A673 (cell line): ENCODE measurements at regions of chr7 and their contacts with region 1.

Region 1: DNA sequence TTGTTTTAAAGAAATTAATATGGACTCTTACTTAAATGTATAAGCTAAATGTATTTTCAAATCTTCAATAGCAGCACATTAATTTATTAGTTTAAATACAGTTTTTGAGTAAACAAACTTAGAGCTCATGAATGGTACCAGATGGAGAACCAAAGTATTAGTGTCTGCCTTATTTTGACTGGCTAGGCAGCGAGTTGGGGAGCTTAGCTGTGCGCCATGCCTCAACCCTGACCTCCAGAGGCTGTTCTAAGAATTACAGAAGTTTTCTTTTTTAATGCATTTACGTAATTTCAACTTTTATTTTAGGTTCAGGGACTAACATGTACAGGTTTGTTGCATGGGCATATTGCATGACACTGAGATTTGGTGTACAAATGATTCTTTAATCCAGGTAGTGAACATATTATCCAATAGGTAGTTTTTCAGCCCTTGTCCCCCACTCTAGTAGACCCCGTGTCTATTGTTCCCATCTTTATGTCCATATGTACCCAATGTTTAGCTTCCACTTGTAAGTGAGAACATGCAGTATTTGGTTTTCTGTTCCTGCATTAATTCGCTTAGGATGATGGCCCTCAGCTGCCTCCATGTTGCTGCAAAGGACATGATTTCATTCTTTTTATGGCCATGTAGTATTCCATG is 166.8 kb downstream of the IQUB start:
- DNase-seq: peak; percentile 76
- H3K4me3 ChIP-seq: no peak overlapping the region
- H3K27ac ChIP-seq: no peak overlapping the region
- H3K4me1 ChIP-seq: peaks cover 8% of the 10 kb centered on the region
- H3K27me3 ChIP-seq: no peaks in the 10 kb centered on the region
- CTCF ChIP-seq: peak; percentile 88

Region 2: DNA sequence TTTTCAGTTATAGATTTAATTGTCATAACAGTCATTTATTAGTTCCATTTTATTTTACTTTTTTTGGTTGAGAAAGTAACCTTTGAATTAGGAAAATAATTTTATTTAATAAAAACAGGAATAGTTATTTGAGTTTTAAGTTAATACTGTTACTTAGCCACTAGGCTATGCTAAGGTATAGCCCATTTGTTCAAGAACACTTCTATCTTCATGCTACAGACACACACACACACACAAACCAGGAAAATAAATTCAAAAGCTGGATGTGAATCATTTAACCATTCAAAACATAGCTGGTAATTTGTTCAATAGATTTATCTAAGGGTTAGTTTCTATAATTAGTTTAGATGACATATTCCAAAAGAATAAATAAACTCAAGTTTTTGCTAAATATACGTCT is 817.1 kb before region 1 on chr7:
- CTCF ChIA-PET with region 1: no interaction called
- POLR2A ChIA-PET with region 1: no interaction called
- intact Hi-C with region 1: loop called (anchors 10 kb)
- DNase-seq: no peak
- H3K4me3 ChIP-seq: no peak overlapping the region
- H3K27ac ChIP-seq: no peak overlapping the region
- H3K4me1 ChIP-seq: no peaks in the 10 kb centered on the region
- H3K27me3 ChIP-seq: no peaks in the 10 kb centered on the region
- CTCF ChIP-seq: peak; percentile 37; the same call in 1 of the 2 replicates

Region 3: DNA sequence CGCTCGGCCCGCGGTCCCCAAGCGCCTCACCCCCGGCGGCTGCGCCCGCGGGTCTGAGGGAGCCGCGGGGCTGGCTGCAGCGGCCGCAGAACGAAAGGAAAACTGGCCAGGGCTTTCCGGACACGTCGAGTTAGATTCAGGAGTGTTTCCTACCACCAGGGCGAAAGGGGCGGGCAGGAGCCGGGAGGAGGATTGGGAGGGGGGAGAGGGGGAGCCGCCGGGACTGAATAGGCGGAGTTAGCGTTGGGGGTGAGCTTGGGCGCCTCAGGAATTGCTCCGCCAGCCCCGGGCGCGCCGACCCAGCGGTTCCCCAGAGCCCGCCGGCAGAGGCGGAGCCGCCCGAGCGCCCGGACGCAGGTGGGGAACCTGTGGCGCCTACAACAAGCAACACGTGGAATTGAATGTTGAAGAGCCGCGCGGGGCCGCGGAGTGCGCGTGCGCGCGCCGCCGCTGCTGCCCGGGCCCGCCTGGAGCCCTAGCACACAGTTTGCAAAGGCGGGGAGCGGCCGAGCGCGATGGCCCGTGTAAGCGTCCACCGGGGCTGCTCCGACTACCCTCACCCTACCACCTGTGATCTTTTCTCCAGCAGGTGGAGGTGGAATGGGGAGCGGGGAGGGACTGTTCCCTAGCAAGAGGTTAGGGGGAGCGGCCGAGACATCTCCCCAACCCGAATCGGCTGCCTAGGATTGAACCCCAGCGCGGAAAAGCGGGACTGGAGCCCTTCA is 481.1 kb before region 1 on chr7 and contains the start of gene CADPS2:
- CTCF ChIA-PET with region 1: interaction called, 4 read pairs
- POLR2A ChIA-PET with region 1: no interaction called
- intact Hi-C with region 1: loop called (anchors 5 kb)
- DNase-seq: peak; percentile 96
- H3K4me3 ChIP-seq: peak within 1 kb of the TSS; percentile 91
- H3K27ac ChIP-seq: peak within 1 kb of the TSS; percentile 93
- H3K4me1 ChIP-seq: peaks cover 22% of the 10 kb centered on the region
- H3K27me3 ChIP-seq: no peaks in the 10 kb centered on the region
- CTCF ChIP-seq: no peak; the same call in 1 of the 2 replicates
- total RNA-seq, gene CADPS2: 74.4 and 81.3 TPM in 2 replicates

Region 4: DNA sequence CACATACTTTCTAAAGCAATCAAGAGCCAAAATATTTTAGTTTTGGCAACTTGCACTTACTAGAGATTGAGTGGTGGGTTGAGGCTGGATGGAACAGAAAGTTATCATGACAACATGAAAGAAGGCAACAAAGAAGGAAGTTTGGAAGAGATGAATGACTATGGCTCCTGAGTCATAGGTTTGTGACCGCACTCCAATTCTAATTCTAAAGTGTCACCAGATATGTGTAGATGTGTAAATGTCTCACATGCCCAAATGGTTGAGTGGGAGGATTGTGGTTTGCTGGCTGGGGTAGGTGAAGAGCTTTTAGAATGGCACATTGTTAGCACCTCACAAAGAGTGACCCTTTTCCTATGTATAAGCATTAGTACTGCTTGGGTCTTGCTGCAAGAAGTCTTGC is 392.3 kb before region 1 on chr7:
- CTCF ChIA-PET with region 1: interaction called, 6 read pairs
- POLR2A ChIA-PET with region 1: no interaction called
- intact Hi-C with region 1: loop called (anchors 10 kb)
- DNase-seq: no peak
- H3K4me3 ChIP-seq: no peak overlapping the region
- H3K27ac ChIP-seq: peak overlapping the region; percentile 35
- H3K4me1 ChIP-seq: peaks cover 36% of the 10 kb centered on the region
- H3K27me3 ChIP-seq: no peaks in the 10 kb centered on the region
- CTCF ChIP-seq: no peak

Region 5: GRCh38 chr7:123208793-123209192 is 158.8 kb before region 1 on chr7:
- CTCF ChIA-PET with region 1: interaction called, 3 read pairs
- POLR2A ChIA-PET with region 1: no interaction called
- intact Hi-C with region 1: loop called (anchors 1 kb)
- DNase-seq: peak; percentile 42
- H3K4me3 ChIP-seq: no peak overlapping the region
- H3K27ac ChIP-seq: no peak overlapping the region
- H3K4me1 ChIP-seq: peaks cover 4% of the 10 kb centered on the region
- H3K27me3 ChIP-seq: no peaks in the 10 kb centered on the region
- CTCF ChIP-seq: peak; percentile 62